Activated B cell treated with CpG ODN at 0.5 μM for 24 hours (primary cell): ENCODE measurements at regions of chr20 and their contacts with region 1.

Region 1: GRCh38 chr20:44582311-44583025 is at the start of gene PKIG:
- DNase-seq: no peak
- ATAC-seq: no peak
- H3K4me3 Mint-ChIP-seq: peak within 1 kb of the TSS; percentile 94
- H3K27ac Mint-ChIP-seq: peak within 1 kb of the TSS; percentile 96
- H3K4me1 Mint-ChIP-seq: peaks cover 79% of the 10 kb centered on the region
- H3K27me3 Mint-ChIP-seq: no peaks in the 10 kb centered on the region
- CTCF ChIP-seq: no peak
- total RNA-seq, gene PKIG: 181 and 191 TPM in 2 replicates

Region 2: DNA sequence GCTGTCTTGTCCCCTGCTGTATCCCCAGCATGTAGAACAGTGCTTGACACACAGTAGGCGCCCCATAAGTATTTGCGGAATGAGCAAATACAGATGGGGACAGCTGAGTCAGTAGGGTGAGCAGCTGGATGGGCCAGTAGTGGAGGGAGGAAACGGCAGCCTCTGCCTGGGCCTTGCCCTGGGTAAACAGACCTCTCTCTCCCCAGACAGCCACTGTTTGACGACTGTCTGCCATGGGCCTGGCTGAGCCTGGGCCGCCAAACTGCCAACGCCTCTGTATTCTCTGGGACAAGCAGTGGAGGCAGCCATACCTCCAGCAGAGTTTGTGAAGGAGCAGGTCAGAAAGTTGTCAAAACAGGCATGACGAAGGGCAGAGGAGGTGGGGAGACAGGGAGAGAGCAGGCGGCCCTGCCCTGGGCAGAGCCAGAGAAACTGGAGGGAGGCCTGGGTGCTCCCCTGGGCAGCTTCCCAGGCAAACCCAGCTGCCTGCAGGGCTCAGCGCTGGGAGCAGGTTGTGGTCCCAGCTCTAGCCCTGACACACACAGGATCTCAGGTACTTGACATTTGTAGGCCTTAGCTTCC is 211.7 kb before region 1 on chr20:
- CTCF ChIA-PET with region 1: no interaction called
- POLR2A ChIA-PET with region 1: no interaction called
- intact Hi-C with region 1: no loop called
- DNase-seq: no peak
- ATAC-seq: no peak
- H3K4me3 Mint-ChIP-seq: no peak overlapping the region
- H3K27ac Mint-ChIP-seq: no peak overlapping the region
- H3K4me1 Mint-ChIP-seq: no peaks in the 10 kb centered on the region
- H3K27me3 Mint-ChIP-seq: peaks cover 5% of the 10 kb centered on the region
- CTCF ChIP-seq: no peak

Region 3: DNA sequence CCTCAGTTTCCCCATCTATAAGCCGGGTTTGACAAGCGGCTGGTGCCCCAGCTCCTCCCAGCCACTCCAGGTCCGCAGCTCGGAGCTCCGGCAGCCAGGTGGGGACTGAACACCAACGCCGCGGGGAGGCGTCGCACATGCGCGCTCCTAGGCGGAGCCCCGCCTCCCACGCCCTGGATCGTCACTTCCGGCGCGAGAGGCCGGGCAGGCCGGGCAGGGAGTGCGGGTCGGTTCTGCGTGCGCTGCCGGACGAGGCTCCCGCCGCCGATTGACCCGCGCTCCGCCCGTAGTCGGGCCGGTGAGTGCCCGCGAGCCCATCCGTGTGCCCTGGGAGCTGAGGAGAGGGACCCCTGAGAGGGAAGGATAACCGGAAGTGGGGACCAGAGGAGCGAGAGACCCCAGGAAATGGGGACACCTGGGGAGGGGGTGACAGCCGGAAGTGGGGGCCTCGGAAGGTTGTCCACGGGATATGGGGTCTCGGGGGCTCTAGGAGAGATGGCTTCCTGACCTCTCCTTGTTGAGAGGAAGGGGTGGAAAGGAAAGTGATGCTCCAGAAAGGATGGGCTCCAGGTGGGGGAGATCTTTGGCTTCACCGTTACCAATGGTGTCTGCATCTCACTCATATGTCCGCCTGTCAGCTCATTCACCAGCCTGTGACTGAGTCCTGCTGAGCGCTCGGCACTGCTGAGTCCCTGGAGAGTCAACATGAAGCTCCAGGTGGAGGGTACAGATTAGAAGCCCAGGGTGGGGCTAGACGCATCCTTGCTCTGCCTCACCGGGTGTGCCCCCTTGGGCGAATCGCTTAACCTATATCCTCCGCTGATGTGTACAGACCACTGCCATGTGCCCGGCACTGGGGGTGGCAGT is 106.5 kb before region 1 on chr20 and contains the start of gene TTPAL:
- CTCF ChIA-PET with region 1: no interaction called
- POLR2A ChIA-PET with region 1: interaction called, 4 read pairs
- intact Hi-C with region 1: loop called (anchors 2 kb)
- DNase-seq: peak; percentile 93
- ATAC-seq: peak; percentile 91
- H3K4me3 Mint-ChIP-seq: peak within 1 kb of the TSS; percentile 96
- H3K27ac Mint-ChIP-seq: peak within 1 kb of the TSS; percentile 94
- H3K4me1 Mint-ChIP-seq: peaks cover 40% of the 10 kb centered on the region
- H3K27me3 Mint-ChIP-seq: no peaks in the 10 kb centered on the region
- CTCF ChIP-seq: no peak
- total RNA-seq, gene TTPAL: 27.5 and 27.7 TPM in 2 replicates

Region 4: DNA sequence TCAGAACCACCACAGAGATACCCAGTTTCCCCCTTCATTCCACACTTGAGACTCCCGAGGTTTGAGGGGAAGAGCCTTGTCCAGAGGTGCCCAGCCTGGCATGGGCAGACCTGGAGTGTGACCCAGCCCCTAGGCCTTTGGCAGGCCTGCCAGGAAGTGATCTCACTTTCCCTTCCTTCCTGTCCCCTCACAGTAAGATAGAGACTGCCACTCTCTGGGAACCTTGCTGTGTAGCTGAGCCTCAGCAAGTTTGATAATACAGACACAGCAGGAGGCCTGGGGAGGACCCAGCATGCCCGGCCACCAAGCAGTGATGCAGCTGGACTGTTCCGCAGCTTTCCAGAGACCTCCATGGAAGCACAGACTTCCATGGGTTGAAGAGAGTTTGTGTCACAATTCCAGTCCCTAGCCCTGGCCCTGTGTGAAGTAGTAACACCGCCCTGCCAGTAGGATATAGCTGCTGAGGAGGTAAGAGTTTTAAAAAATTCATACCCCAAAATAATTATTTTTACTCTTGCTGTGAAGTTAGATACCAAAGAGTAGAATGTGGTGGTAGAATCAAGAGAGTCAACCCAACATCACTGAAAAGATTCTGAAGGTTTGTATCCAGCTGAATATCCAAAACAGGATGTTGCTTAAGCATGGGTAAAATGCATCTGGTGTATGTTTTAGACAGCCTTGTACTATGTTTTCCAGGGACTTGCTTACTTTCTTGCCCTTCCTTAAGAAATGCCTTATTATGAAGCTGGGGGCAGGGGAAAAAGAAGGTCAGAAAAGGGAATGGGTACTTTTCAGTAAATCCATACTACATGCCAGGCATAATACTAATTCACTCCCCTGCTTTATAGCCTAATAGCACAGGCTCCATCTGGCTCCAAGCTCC is 16.2 kb after region 1 on chr20:
- CTCF ChIA-PET with region 1: interaction called, 32 read pairs
- POLR2A ChIA-PET with region 1: interaction called, 154 read pairs
- intact Hi-C with region 1: loop called (anchors 1 kb)
- DNase-seq: no peak
- ATAC-seq: peak; percentile 32
- H3K4me3 Mint-ChIP-seq: peak overlapping the region; percentile 77
- H3K27ac Mint-ChIP-seq: peak overlapping the region; percentile 87
- H3K4me1 Mint-ChIP-seq: peaks cover 87% of the 10 kb centered on the region
- H3K27me3 Mint-ChIP-seq: no peaks in the 10 kb centered on the region
- CTCF ChIP-seq: no peak

Region 5: DNA sequence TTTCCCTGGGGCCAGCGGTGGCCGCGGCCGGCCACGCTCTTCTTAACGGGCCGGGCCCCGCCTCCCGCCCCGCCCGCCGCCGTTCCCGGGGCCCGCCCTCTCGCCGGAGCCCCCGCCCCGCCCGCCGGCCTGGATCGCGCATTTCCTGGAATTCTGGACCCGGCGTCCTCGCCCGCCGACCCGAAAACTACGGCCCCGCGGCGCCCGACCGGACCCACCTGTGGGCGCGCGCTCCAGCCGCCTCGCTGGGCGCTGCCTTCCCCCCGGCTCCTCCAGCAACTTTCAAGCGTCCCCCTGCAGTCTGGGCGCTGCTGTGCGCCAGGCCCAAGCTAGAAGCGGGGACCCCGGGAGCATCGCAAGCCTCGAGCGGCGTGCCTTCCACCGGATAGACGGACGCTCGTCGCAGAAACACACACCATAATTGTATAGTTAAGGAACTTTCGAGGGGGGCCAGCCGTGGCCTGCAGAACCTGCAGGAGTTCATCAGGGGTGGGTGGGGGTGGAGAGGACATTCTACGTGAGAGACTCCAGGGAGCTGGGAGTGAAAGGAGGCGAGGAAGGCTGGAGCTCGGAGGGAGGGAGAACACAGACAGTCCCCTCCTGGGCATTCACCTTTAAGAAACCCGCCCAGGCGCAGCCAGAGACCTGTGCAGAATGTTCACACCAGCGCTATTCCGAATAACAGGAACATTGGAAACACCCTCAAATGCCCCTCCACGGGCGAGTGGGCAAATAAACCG is 69.4 kb after region 1 on chr20 and contains the start of gene ADA:
- CTCF ChIA-PET with region 1: no interaction called
- POLR2A ChIA-PET with region 1: interaction called, 38 read pairs
- intact Hi-C with region 1: loop called (anchors 1 kb)
- DNase-seq: peak; percentile 54
- ATAC-seq: peak; percentile 62
- H3K4me3 Mint-ChIP-seq: peak within 1 kb of the TSS; percentile 87
- H3K27ac Mint-ChIP-seq: peak within 1 kb of the TSS; percentile 74
- H3K4me1 Mint-ChIP-seq: peaks cover 53% of the 10 kb centered on the region
- H3K27me3 Mint-ChIP-seq: no peaks in the 10 kb centered on the region
- CTCF ChIP-seq: no peak
- total RNA-seq, gene ADA: 68.9 and 72.3 TPM in 2 replicates